ENCODE measurements at regions of chr1 and their contacts with region 1.

Region 1: GRCh38 chr1:65075123-65075976 is 72.7 kb upstream of the AK4 start:
- DNase-seq: peak; percentile 57
- ATAC-seq: peak; percentile 92
- H3K4me3 ChIP-seq: no peak overlapping the region
- H3K27ac ChIP-seq: no peak overlapping the region
- H3K4me1 ChIP-seq: no peaks in the 10 kb centered on the region; the same call in 1 of the 2 replicates
- H3K27me3 ChIP-seq: 0 out of 5 replicates have a peak, but pooled peaks cover 0 to 6% of the 10 kb centered on the region in 2 experiments
- CTCF ChIP-seq: peak; percentile 81
- EP300 ChIP-seq: no peak
- POLR2A ChIP-seq: no peak
- RAD21 ChIP-seq: no peak

Region 2: DNA sequence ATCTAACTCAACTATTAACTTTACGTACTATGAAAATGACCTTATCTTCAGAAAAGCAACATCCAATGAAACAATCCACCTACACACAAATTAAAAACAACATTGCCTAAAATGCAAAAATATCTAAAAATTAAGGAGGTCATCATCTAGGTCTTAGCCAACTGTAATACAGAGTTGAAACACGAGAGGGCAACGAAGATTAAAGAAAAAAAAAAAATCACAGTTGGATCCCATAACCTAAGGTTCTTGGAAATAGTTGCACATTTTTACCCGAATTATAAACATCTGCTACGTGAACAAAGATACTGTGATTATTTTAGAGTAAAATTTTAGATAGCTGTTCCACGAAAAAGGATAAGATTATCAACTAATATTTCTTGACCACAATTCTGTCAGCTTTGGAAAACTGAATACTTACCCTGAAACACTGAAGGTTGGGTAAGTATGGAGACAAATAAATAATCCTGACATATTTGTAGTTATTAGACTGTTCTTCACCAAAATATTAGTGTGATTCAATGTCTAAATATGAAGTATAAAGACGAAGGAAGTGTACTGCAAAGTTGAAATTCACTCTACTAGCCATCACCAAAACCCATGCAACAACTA is 15.3 kb before region 1 on chr1:
- CTCF ChIA-PET with region 1: interaction called, 9 read pairs
- POLR2A ChIA-PET with region 1: no interaction called
- in situ Hi-C with region 1: no loop called
- intact Hi-C with region 1: loop called (anchors 2 kb)
- DNase-seq: peak; percentile 17
- ATAC-seq: 0 out of 3 replicates have a peak, but pooled peaks have one; percentile 25
- H3K4me3 ChIP-seq: no peak overlapping the region
- H3K27ac ChIP-seq: no peak overlapping the region
- H3K4me1 ChIP-seq: no peaks in the 10 kb centered on the region
- H3K27me3 ChIP-seq: no peaks in the 10 kb centered on the region
- CTCF ChIP-seq: peak; percentile 48
- EP300 ChIP-seq: no peak
- POLR2A ChIP-seq: no peak
- RAD21 ChIP-seq: peak; percentile 47; the same call in 1 of the 2 replicates

Region 3: GRCh38 chr1:65141394-65141793 is 66.0 kb after region 1 on chr1:
- CTCF ChIA-PET with region 1: no interaction called
- POLR2A ChIA-PET with region 1: no interaction called
- in situ Hi-C with region 1: no loop called
- intact Hi-C with region 1: loop called (anchors 5 kb)
- DNase-seq: no peak
- ATAC-seq: no peak
- H3K4me3 ChIP-seq: no peak overlapping the region
- H3K27ac ChIP-seq: no peak overlapping the region
- H3K4me1 ChIP-seq: peaks cover 47% of the 10 kb centered on the region
- H3K27me3 ChIP-seq: no peaks in the 10 kb centered on the region; a peak in 1 of 5 replicates
- CTCF ChIP-seq: no peak
- EP300 ChIP-seq: no peak
- POLR2A ChIP-seq: no peak
- RAD21 ChIP-seq: no peak